MCF 10A (cell line): ENCODE measurements at regions of chr16 and their contacts with region 1.

Region 1: GRCh38 chr16:20866145-20866772 is 33.9 kb downstream of the DCUN1D3 start:
- DNase-seq: peak; percentile 91
- H3K4me3 Mint-ChIP-seq: peak overlapping the region; percentile 64
- H3K27ac Mint-ChIP-seq: peak overlapping the region; percentile 99
- H3K4me1 Mint-ChIP-seq: peaks cover 63% of the 10 kb centered on the region
- H3K27me3 Mint-ChIP-seq: no peaks in the 10 kb centered on the region
- CTCF ChIP-seq: no peak

Region 2: DNA sequence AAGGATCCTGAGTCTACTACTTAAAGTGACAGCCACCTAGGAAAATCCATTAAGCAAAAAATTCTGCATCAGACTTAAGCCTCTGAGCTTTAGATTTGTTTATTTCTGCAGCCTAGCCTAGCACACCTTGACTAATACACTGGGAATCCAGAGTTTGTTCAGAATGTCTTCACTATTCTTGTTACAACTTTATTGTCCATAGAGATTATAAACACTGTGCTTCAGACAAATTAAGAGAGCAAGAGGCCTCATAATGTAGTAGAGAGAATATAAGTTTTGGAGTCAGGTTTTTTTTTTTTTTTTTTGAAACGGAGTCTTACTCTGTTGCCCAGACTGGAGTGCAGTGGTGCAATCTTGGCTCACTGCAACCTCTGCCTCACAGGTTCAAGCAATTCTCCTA is 115.7 kb before region 1 on chr16:
- CTCF ChIA-PET with region 1: no interaction called
- POLR2A ChIA-PET with region 1: no interaction called
- intact Hi-C with region 1: no loop called
- DNase-seq: no peak
- H3K4me3 Mint-ChIP-seq: no peak overlapping the region
- H3K27ac Mint-ChIP-seq: no peak overlapping the region
- H3K4me1 Mint-ChIP-seq: no peaks in the 10 kb centered on the region
- H3K27me3 Mint-ChIP-seq: peaks cover 39% of the 10 kb centered on the region
- CTCF ChIP-seq: no peak

Region 3: GRCh38 chr16:20774703-20775362 is 91.4 kb before region 1 on chr16:
- CTCF ChIA-PET with region 1: no interaction called
- POLR2A ChIA-PET with region 1: no interaction called
- intact Hi-C with region 1: no loop called
- DNase-seq: peak; percentile 81
- H3K4me3 Mint-ChIP-seq: no peak overlapping the region
- H3K27ac Mint-ChIP-seq: no peak overlapping the region
- H3K4me1 Mint-ChIP-seq: no peaks in the 10 kb centered on the region
- H3K27me3 Mint-ChIP-seq: no peaks in the 10 kb centered on the region
- CTCF ChIP-seq: peak; percentile 66

Region 4: DNA sequence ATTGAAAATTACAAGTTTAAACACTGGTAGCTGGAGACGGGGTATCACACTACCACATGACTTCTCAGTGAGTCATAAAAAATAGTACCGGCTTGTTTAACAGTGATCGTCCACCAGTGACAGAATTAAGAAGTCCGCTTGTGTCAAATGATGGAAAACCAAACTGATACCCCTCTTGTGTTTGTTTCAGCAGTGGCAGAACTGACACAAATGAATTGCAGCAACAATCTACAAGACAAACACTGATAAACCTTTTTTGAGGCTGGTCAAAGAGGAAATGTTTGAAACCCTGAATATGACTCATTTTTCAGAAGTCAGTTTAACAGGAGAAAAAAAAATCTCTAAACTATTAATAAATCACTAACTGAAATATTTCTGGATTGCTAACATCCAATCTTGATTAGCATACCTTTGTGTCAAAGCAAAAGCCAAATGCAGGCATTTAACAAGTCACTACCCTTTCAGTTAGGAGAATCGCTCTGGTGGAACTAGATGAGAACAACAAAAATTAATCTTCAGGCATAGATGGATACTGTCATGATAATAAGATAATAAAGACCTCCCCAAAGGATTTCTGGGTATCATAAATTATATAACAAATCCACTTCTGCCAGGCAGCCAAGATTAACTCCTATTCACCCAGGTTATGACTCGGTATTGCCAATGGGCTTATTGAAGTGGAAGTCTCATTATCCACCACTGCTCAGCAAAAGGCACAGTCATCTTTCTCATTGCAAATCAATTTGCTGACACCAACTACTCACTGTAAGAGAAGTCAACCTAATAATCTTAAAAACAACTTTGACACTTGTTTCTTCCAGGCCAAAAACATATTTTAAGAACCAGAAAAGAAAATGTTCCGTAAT is 13.1 kb after region 1 on chr16:
- CTCF ChIA-PET with region 1: interaction called, 12 read pairs
- POLR2A ChIA-PET with region 1: interaction called, 22 read pairs
- intact Hi-C with region 1: no loop called
- DNase-seq: peak; percentile 34
- H3K4me3 Mint-ChIP-seq: peak overlapping the region; percentile 35
- H3K27ac Mint-ChIP-seq: peak overlapping the region; percentile 75
- H3K4me1 Mint-ChIP-seq: peaks cover 50% of the 10 kb centered on the region
- H3K27me3 Mint-ChIP-seq: no peaks in the 10 kb centered on the region
- CTCF ChIP-seq: no peak

Region 5: DNA sequence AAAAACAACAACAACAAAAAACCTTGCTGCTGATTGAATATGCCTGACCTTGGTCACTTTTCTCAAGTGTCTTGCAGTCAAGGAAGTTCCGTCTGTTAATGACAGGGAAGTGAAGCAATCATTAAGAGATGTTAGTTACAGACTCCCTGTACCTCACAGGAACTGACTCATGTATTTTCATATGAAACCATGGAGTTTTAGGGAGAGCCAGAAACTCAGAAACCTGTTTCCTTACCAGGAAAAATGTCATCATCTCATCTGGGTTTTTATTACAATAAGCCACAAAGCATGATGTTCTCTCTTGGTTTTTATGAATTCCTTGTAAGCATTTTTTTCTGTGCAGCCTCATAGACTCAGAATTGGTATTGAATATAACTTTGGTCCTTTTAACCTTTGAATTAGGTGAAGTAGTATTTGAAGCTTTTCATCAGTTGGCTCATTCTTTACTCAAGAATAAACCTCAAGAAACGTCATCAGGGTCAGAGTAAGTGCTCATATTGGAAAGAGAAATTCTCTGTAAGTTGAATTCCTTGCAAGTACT is 44.6 kb after region 1 on chr16:
- CTCF ChIA-PET with region 1: interaction called, 4 read pairs
- POLR2A ChIA-PET with region 1: interaction called, 343 read pairs
- intact Hi-C with region 1: no loop called
- DNase-seq: peak; percentile 89
- H3K4me3 Mint-ChIP-seq: peak overlapping the region; percentile 47
- H3K27ac Mint-ChIP-seq: peak overlapping the region; percentile 97
- H3K4me1 Mint-ChIP-seq: peaks cover 41% of the 10 kb centered on the region
- H3K27me3 Mint-ChIP-seq: no peaks in the 10 kb centered on the region
- CTCF ChIP-seq: no peak

Region 6: DNA sequence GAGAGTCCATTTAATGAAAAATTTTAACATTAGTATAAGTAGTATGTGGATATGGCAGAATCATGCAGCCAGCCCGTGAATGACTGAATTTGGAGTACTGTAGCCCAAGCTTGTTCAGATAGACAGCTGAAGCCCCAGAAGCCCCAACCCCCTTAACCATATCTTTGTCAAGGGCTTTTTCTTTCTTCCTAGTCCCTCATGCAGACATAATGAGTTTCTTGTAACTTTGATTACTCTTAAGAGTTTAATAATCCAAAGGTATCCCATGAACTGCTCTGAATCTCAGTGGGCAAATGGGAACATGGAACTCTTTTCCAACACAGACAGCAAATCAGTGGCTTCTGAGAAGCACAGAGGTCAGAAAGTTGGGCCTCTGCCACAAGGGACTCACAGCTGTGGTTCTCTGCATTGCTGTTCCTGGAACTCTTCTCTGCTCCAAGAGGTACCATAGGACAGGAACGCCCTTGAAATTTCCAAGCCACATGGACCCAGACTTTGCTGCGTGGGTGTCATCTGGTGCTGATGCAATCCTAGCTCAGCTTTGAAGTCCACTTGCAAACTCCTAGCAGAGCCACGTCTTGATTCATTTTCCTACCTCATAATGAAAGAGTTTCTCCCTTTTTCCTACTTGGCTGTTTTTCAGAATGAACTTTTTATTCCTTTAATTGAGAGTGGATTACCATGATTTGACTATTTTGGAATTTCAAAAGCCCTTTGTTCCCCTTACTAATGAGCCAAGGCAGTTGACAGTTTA is 52.4 kb after region 1 on chr16:
- CTCF ChIA-PET with region 1: interaction called, 3 read pairs
- POLR2A ChIA-PET with region 1: interaction called, 18 read pairs
- intact Hi-C with region 1: no loop called
- DNase-seq: peak; percentile 77
- H3K4me3 Mint-ChIP-seq: no peak overlapping the region
- H3K27ac Mint-ChIP-seq: peak overlapping the region; percentile 70
- H3K4me1 Mint-ChIP-seq: peaks cover 24% of the 10 kb centered on the region
- H3K27me3 Mint-ChIP-seq: no peaks in the 10 kb centered on the region
- CTCF ChIP-seq: no peak